Calu3 (cell line): ENCODE measurements at regions of chr2 and their contacts with region 1.

Region 1: GRCh38 chr2:59301466-59302402 is 1060.6 kb upstream of the FANCL start:
- DNase-seq: peak; percentile 57
- H3K4me3 Mint-ChIP-seq: no peak overlapping the region
- H3K27ac Mint-ChIP-seq: no peak overlapping the region
- H3K4me1 Mint-ChIP-seq: no peaks in the 10 kb centered on the region
- H3K27me3 Mint-ChIP-seq: peaks cover 12% of the 10 kb centered on the region
- CTCF ChIP-seq: peak; percentile 31

Region 2: DNA sequence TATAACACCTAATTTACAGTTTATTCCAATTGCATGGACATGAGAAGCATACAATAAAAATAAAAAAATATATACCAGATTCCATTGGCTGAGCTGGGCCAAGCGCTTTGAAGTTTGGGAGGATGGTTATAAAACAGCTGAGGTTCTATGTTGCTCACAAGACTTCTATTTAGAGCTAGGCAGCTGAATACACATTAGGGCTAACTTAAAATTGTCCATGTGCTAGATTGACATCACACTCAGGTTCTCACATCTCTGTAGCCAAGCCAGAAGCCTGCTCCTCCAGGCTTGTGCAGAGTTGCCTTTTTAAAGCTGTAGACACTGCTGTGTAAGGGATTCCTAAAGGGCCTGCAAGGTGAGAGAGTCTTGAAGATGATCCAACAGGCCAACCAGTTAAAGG is 189.5 kb before region 1 on chr2:
- CTCF ChIA-PET with region 1: no interaction called
- intact Hi-C with region 1: no loop called
- DNase-seq: no peak
- H3K4me3 Mint-ChIP-seq: no peak overlapping the region
- H3K27ac Mint-ChIP-seq: no peak overlapping the region
- H3K4me1 Mint-ChIP-seq: no peaks in the 10 kb centered on the region
- H3K27me3 Mint-ChIP-seq: no peaks in the 10 kb centered on the region
- CTCF ChIP-seq: no peak

Region 3: GRCh38 chr2:59584958-59585357 is 283.2 kb after region 1 on chr2:
- CTCF ChIA-PET with region 1: no interaction called
- intact Hi-C with region 1: loop called (anchors 10 kb)
- DNase-seq: peak; percentile 26
- H3K4me3 Mint-ChIP-seq: no peak overlapping the region
- H3K27ac Mint-ChIP-seq: no peak overlapping the region
- H3K4me1 Mint-ChIP-seq: no peaks in the 10 kb centered on the region
- H3K27me3 Mint-ChIP-seq: no peaks in the 10 kb centered on the region
- CTCF ChIP-seq: no peak

Region 4: DNA sequence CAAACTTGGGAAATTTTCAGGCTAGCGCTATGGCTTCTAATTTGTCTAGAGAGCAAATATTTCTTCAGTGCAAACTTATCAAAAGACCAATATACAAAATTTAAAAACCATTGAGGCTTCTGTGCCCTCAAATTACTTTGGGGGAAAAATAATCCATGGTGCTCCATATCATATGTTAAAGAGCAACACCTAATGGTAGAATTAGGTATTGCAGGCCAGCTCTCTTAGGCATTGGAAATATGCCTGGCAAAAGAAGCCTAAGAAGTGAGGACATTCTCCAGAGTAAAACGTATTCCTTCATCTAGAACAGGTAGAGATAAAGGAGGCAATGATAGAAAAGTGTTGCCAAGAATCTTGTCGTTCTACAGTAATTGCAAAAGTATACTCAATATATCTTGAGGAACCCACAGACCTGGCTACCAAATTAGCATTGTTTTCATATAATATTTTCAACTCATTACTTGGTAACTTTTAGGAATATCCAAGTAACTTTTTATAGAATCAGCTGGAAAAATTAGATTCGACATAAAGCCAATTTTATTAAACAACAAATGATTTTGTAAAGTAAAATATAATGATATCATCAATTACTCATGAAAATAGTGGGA is 850.6 kb after region 1 on chr2:
- CTCF ChIA-PET with region 1: no interaction called
- intact Hi-C with region 1: loop called (anchors 5 kb)
- DNase-seq: peak; percentile 8
- H3K4me3 Mint-ChIP-seq: no peak overlapping the region
- H3K27ac Mint-ChIP-seq: no peak overlapping the region
- H3K4me1 Mint-ChIP-seq: no peaks in the 10 kb centered on the region
- H3K27me3 Mint-ChIP-seq: no peaks in the 10 kb centered on the region
- CTCF ChIP-seq: peak; percentile 61